Activated naive CD4-positive, alpha-beta T cell treated with anti-CD3 and anti-CD28 coated beads for 36 hours (primary cell): ENCODE measurements at regions of chr2 and their contacts with region 1.

Region 1: GRCh38 chr2:219530048-219530963 is 13.3 kb downstream of the CHPF start:
- DNase-seq: peak; percentile 90
- H3K4me3 Mint-ChIP-seq: no peak overlapping the region
- H3K27ac Mint-ChIP-seq: no peak overlapping the region
- H3K4me1 Mint-ChIP-seq: no peaks in the 10 kb centered on the region
- H3K27me3 Mint-ChIP-seq: peaks cover 52% of the 10 kb centered on the region

Region 2: GRCh38 chr2:219289537-219290361 is 240.6 kb before region 1 on chr2:
- CTCF ChIA-PET with region 1: no interaction called
- intact Hi-C with region 1: no loop called
- DNase-seq: no peak
- H3K4me3 Mint-ChIP-seq: no peak overlapping the region
- H3K27ac Mint-ChIP-seq: no peak overlapping the region
- H3K4me1 Mint-ChIP-seq: peaks cover 9% of the 10 kb centered on the region
- H3K27me3 Mint-ChIP-seq: no peaks in the 10 kb centered on the region

Region 3: GRCh38 chr2:219459460-219460311 is 70.6 kb before region 1 on chr2:
- CTCF ChIA-PET with region 1: interaction called, 17 read pairs
- intact Hi-C with region 1: loop called (anchors 1 kb)
- DNase-seq: peak; percentile 55
- H3K4me3 Mint-ChIP-seq: no peak overlapping the region
- H3K27ac Mint-ChIP-seq: no peak overlapping the region
- H3K4me1 Mint-ChIP-seq: no peaks in the 10 kb centered on the region
- H3K27me3 Mint-ChIP-seq: no peaks in the 10 kb centered on the region

Region 4: GRCh38 chr2:219475697-219476651 is 54.3 kb before region 1 on chr2:
- CTCF ChIA-PET with region 1: interaction called, 73 read pairs
- intact Hi-C with region 1: loop called (anchors 1 kb)
- DNase-seq: peak; percentile 80
- H3K4me3 Mint-ChIP-seq: no peak overlapping the region
- H3K27ac Mint-ChIP-seq: no peak overlapping the region
- H3K4me1 Mint-ChIP-seq: peaks cover 4% of the 10 kb centered on the region
- H3K27me3 Mint-ChIP-seq: peaks cover 2% of the 10 kb centered on the region

Region 5: GRCh38 chr2:219509780-219510511 is 20.4 kb before region 1 on chr2:
- CTCF ChIA-PET with region 1: interaction called, 29 read pairs
- intact Hi-C with region 1: loop called (anchors 1 kb)
- DNase-seq: peak; percentile 68
- H3K4me3 Mint-ChIP-seq: peak overlapping the region; percentile 26
- H3K27ac Mint-ChIP-seq: no peak overlapping the region
- H3K4me1 Mint-ChIP-seq: peaks cover 25% of the 10 kb centered on the region
- H3K27me3 Mint-ChIP-seq: peaks cover 41% of the 10 kb centered on the region

Region 6: GRCh38 chr2:219515874-219516629 is 14.3 kb before region 1 on chr2:
- CTCF ChIA-PET with region 1: interaction called, 35 read pairs
- intact Hi-C with region 1: no loop called
- DNase-seq: no peak
- H3K4me3 Mint-ChIP-seq: no peak overlapping the region
- H3K27ac Mint-ChIP-seq: no peak overlapping the region
- H3K4me1 Mint-ChIP-seq: peaks cover 13% of the 10 kb centered on the region
- H3K27me3 Mint-ChIP-seq: peaks cover 62% of the 10 kb centered on the region